ENCODE measurements at regions of chr6 and their contacts with region 1.

Region 1: DNA sequence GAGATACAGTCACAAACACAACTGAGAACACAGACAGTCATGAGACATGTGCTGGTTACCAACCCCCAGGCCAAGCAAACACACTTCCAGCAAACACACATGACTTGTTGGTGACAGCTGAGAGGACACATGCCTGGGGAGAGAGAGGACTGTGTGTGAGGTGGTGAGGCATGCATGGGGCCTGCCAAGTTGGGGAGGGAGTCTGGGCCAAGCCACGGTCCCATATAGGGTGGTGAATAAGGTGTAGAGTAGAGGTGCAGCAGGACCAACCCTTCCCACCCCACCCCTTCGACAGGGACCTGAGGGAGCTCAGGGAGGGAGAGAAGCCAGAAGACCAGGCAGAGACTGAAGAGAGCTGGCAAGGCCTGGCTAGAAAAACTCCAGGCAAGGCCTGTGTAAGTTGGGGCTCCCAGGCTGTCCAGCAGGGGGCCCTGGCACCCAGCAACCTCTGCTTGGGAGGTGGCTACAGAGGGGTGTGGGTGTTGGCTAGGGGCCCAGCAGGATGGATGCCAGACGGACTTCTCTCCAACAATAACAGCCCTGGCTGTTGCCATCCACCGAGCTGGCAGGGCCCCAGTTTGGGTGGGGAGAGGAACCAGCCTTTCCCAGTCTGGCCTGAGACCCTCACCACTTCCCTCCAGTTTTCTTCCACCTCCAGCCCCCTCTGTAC is 2.0 kb upstream of the SLC29A1 start:
- DNase-seq: peak; percentile 86
- H3K4me3 Mint-ChIP-seq: peak overlapping the region; percentile 23
- H3K27ac Mint-ChIP-seq: no peak overlapping the region
- H3K4me1 Mint-ChIP-seq: peaks cover 46% of the 10 kb centered on the region
- H3K27me3 Mint-ChIP-seq: peaks cover 53% of the 10 kb centered on the region

Region 2: GRCh38 chr6:44172731-44173500 is 48.5 kb before region 1 on chr6:
- CTCF ChIA-PET with region 1: interaction called, 11 read pairs
- DNase-seq: peak; percentile 87
- H3K4me3 Mint-ChIP-seq: no peak overlapping the region
- H3K27ac Mint-ChIP-seq: no peak overlapping the region
- H3K4me1 Mint-ChIP-seq: peaks cover 14% of the 10 kb centered on the region
- H3K27me3 Mint-ChIP-seq: peaks cover 68% of the 10 kb centered on the region

Region 3: GRCh38 chr6:44237813-44238433 is 16.5 kb after region 1 on chr6:
- CTCF ChIA-PET with region 1: interaction called, 15 read pairs
- DNase-seq: peak; percentile 82
- H3K4me3 Mint-ChIP-seq: peak overlapping the region; percentile 79
- H3K27ac Mint-ChIP-seq: peak overlapping the region; percentile 91
- H3K4me1 Mint-ChIP-seq: peaks cover 22% of the 10 kb centered on the region
- H3K27me3 Mint-ChIP-seq: peaks cover 8% of the 10 kb centered on the region

Region 4: DNA sequence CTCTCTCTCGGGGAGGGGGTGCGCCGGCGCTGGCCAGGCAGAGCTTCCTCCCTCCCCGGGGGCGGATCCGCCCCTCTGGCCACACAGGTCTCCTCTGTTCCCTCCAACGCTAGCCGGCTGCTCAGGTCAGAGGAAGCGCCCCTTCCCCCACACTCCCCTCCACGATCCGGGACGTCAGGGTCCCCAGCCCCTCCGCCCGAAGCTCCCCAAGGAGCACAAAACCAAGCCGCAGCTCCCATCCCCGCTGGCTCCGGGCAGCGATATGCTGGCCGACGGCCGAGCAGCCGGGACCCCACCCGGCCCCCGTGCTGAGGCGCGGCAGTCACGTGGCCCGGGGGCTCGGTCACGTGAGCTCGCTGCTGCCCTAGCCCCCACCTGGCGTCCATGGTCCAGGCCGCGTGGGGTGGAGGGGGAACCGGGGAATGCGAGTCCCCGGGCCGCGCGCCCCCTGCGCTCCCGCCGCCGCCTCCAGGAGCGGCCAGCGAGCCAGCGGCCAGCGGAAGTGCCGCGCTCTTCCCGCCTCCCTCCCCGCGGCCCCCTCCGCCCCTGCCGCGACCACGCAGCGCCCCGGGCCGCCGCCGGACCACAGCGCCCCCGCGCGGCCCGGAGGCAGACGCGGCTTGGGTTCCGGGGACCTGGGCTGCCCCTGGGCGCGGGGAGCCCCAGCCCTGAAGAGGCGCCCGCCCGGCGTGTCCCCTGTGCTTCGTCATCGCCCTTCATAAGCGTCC is 35.8 kb after region 1 on chr6 and contains the start of gene SLC35B2:
- CTCF ChIA-PET with region 1: interaction called, 30 read pairs
- DNase-seq: peak; percentile 71
- H3K4me3 Mint-ChIP-seq: peak within 1 kb of the TSS; percentile 87
- H3K27ac Mint-ChIP-seq: peak within 1 kb of the TSS; percentile 85
- H3K4me1 Mint-ChIP-seq: peaks cover 59% of the 10 kb centered on the region
- H3K27me3 Mint-ChIP-seq: no peaks in the 10 kb centered on the region